ENCODE measurements at regions of chr6 and their contacts with region 1.

Region 1: DNA sequence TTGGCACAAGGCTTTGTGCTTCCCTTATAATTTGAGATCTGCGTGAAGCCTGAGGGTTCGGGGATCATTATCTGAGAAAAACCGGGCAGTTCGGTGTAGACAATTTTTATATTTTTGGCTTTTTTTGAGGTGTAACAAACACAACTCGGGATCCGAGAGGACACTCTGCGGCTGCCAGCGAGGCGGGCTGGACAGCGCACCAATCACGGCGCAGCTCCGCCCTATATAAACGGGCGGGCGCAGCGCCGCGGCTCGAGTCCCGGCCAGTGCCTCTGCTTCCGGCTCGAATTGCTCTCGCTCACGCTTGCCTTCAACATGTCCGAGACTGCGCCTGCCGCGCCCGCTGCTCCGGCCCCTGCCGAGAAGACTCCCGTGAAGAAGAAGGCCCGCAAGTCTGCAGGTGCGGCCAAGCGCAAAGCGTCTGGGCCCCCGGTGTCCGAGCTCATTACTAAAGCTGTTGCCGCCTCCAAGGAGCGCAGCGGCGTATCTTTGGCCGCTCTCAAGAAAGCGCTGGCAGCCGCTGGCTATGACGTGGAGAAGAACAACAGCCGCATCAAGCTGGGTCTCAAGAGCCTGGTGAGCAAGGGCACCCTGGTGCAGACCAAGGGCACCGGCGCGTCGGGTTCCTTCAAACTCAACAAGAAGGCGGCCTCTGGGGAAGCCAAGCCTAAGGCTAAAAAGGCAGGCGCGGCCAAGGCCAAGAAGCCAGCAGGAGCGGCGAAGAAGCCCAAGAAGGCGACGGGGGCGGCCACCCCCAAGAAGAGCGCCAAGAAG is 69.0 kb downstream of the HFE start:
- DNase-seq: peak; percentile 74 to 91 (median 83)
- ATAC-seq: peak; percentile 41 to 65 (median 63)
- H3K4me3 ChIP-seq: peak overlapping the region; percentile 73 to 87
- H3K4me3 Mint-ChIP-seq: peak overlapping the region; percentile 91 to 98 (median 97)
- H3K27ac ChIP-seq: peak overlapping the region; percentile 90
- H3K27ac Mint-ChIP-seq: peak overlapping the region; percentile 94 to 98
- H3K4me1 ChIP-seq: peaks cover 15 to 31% of the 10 kb centered on the region in 2 experiments
- H3K4me1 Mint-ChIP-seq: peaks cover 28 to 60% (median 40%) of the 10 kb centered on the region in 3 donors
- H3K27me3 ChIP-seq: no peaks in the 10 kb centered on the region
- H3K27me3 Mint-ChIP-seq: no peaks in the 10 kb centered on the region

Region 2: GRCh38 chr6:26045065-26045927 is 111.0 kb before region 1 on chr6:
- CTCF ChIA-PET with region 1: interaction called in 1 of 2 experiments, 3 read pairs
- POLR2A ChIA-PET with region 1: interaction called, 3 to 70 read pairs
- DNase-seq: peak; percentile 45 to 90 (median 78)
- ATAC-seq: peak; percentile 63 to 66 (median 64)
- H3K4me3 ChIP-seq: peak overlapping the region; percentile 77 to 83
- H3K4me3 Mint-ChIP-seq: peak overlapping the region; percentile 84 to 91 (median 90)
- H3K27ac ChIP-seq: peak overlapping the region; percentile 90
- H3K27ac Mint-ChIP-seq: peak overlapping the region; percentile 98
- H3K4me1 ChIP-seq: peaks cover 5 to 26% of the 10 kb centered on the region in 2 experiments
- H3K4me1 Mint-ChIP-seq: peaks cover 15 to 27% (median 26%) of the 10 kb centered on the region in 3 donors
- H3K27me3 ChIP-seq: no peaks in the 10 kb centered on the region
- H3K27me3 Mint-ChIP-seq: no peaks in the 10 kb centered on the region

Region 3: DNA sequence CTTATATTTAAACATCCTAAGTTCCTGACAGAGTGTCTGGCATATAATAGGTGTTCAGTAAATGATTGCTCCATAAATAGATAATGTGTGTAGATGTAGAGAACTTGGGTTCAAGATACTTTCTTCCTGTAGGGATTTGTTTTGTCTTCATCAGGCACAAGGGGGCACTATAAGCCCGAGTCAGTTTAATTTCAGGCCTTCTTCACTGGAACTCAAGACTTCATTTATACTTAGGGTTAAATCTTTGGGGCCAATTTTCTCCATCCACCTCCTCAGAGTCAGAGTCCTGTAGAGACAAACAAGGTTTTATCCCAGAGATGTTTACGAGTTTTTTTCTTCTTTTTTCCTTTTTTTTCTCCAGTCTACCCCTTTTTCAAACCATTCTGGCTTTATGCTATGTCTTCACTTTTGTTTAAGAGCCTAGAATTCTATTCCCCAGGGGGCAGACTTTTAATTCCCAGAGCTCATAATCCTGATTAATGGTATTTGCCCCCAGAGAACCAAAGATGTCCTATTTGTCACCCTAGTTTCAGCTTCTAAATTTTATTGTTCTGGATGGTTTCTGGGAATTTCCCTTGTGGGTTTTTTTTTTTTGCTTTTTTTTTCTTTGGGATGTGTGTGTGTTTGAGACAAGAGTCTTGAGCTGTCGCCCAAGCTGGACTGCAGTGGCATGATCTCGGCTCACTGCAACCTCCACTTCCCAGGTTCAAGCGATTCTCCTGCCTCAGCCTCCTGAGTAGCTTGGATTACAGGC is 19.3 kb after region 1 on chr6:
- CTCF ChIA-PET with region 1: interaction called in 1 of 2 experiments, 22 read pairs
- POLR2A ChIA-PET with region 1: interaction called, 23 to 75 read pairs
- DNase-seq: peak in 24 of 35 experiments; percentile 30 to 85 (median 50)
- ATAC-seq: no peak
- H3K4me3 ChIP-seq: no peak overlapping the region
- H3K4me3 Mint-ChIP-seq: peak overlapping the region in 1 of 3 donors; percentile 5
- H3K27ac ChIP-seq: peak overlapping the region; percentile 37
- H3K27ac Mint-ChIP-seq: peak overlapping the region; percentile 58 to 73
- H3K4me1 ChIP-seq: peaks cover 11 to 15% of the 10 kb centered on the region in 2 experiments
- H3K4me1 Mint-ChIP-seq: peaks cover 36 to 39% (median 37%) of the 10 kb centered on the region in 3 donors
- H3K27me3 ChIP-seq: no peaks in the 10 kb centered on the region
- H3K27me3 Mint-ChIP-seq: no peaks in the 10 kb centered on the region

Region 4: GRCh38 chr6:26216356-26216885 is 60.2 kb after region 1 on chr6:
- CTCF ChIA-PET with region 1: interaction called in 1 of 2 experiments, 27 read pairs
- POLR2A ChIA-PET with region 1: interaction called, 52 to 231 read pairs
- DNase-seq: peak; percentile 56 to 93 (median 76)
- ATAC-seq: peak; percentile 77 to 87 (median 83)
- H3K4me3 ChIP-seq: peak overlapping the region; percentile 73 to 91
- H3K4me3 Mint-ChIP-seq: no peak overlapping the region
- H3K27ac ChIP-seq: peak overlapping the region; percentile 94
- H3K27ac Mint-ChIP-seq: no peak overlapping the region
- H3K4me1 ChIP-seq: peaks cover 13 to 32% of the 10 kb centered on the region in 2 experiments
- H3K4me1 Mint-ChIP-seq: peaks cover 0 to 8% (median 5%) of the 10 kb centered on the region in 3 donors
- H3K27me3 ChIP-seq: no peaks in the 10 kb centered on the region
- H3K27me3 Mint-ChIP-seq: no peaks in the 10 kb centered on the region

Region 5: DNA sequence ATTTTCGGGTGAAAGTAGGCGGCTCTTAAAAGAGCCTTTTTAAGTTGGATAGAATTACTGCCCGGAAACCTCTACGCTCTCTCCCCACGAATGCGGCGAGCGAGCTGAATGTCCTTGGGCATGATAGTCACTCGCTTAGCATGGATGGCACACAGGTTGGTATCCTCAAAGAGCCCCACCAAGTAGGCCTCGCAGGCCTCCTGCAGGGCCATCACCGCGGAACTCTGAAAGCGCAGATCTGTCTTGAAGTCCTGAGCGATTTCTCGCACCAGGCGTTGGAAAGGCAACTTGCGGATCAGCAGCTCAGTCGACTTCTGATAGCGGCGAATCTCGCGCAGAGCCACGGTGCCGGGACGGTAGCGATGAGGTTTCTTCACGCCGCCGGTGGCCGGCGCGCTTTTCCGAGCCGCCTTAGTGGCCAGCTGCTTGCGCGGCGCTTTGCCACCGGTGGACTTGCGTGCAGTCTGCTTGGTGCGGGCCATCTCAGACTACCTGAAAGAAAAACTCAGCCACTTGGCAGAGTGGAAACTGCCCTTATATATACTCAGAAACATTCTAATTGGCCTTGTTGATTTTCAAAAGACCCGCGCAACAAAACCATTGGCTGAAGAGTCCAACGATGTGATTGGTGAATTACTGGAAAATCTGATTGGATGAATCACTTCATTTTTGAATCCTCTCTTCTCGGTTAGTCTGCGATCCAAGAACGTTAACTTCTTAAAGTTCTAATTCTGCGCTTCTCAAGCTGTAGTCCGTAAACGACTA is 114.8 kb after region 1 on chr6:
- CTCF ChIA-PET with region 1: interaction called, 3 to 6 read pairs
- POLR2A ChIA-PET with region 1: interaction called, 3 to 30 read pairs
- DNase-seq: peak; percentile 49 to 90 (median 74)
- ATAC-seq: peak; percentile 20 to 35 (median 32)
- H3K4me3 ChIP-seq: peak overlapping the region; percentile 71 to 83
- H3K4me3 Mint-ChIP-seq: no peak overlapping the region
- H3K27ac ChIP-seq: peak overlapping the region; percentile 89
- H3K27ac Mint-ChIP-seq: peak overlapping the region in 1 of 2 donors; percentile 58
- H3K4me1 ChIP-seq: peaks cover 18 to 31% of the 10 kb centered on the region in 2 experiments
- H3K4me1 Mint-ChIP-seq: peaks cover 20 to 29% (median 21%) of the 10 kb centered on the region in 3 donors
- H3K27me3 ChIP-seq: no peaks in the 10 kb centered on the region
- H3K27me3 Mint-ChIP-seq: no peaks in the 10 kb centered on the region

Region 6: DNA sequence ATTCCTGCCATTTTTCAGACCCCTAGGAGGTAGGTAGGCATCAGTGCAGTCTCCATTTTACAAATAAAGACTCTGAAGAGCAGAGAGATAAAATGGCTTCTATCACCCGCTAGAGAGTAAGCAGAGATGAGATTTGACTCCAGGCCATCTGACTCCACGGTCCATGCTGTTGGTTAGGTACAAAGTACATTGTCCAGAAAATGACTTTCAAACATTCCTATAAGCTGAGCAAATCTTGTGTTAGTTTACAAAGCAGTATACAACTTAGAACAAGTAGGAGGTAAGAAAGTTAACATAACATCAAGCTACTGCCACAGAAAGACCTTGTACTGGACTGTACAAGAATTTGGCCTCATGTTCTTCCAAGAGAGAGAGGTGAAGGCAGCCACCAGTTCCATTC is 358.7 kb after region 1 on chr6:
- CTCF ChIA-PET with region 1: no interaction called
- POLR2A ChIA-PET with region 1: no interaction called
- DNase-seq: no peak
- ATAC-seq: no peak
- H3K4me3 ChIP-seq: no peak overlapping the region
- H3K4me3 Mint-ChIP-seq: no peak overlapping the region
- H3K27ac ChIP-seq: no peak overlapping the region
- H3K27ac Mint-ChIP-seq: no peak overlapping the region
- H3K4me1 ChIP-seq: peaks cover under 1 to 2% of the 10 kb centered on the region in 2 experiments
- H3K4me1 Mint-ChIP-seq: peaks cover 2 to 3% (median 3%) of the 10 kb centered on the region in 3 donors
- H3K27me3 ChIP-seq: no peaks in the 10 kb centered on the region
- H3K27me3 Mint-ChIP-seq: no peaks in the 10 kb centered on the region

Region 7: DNA sequence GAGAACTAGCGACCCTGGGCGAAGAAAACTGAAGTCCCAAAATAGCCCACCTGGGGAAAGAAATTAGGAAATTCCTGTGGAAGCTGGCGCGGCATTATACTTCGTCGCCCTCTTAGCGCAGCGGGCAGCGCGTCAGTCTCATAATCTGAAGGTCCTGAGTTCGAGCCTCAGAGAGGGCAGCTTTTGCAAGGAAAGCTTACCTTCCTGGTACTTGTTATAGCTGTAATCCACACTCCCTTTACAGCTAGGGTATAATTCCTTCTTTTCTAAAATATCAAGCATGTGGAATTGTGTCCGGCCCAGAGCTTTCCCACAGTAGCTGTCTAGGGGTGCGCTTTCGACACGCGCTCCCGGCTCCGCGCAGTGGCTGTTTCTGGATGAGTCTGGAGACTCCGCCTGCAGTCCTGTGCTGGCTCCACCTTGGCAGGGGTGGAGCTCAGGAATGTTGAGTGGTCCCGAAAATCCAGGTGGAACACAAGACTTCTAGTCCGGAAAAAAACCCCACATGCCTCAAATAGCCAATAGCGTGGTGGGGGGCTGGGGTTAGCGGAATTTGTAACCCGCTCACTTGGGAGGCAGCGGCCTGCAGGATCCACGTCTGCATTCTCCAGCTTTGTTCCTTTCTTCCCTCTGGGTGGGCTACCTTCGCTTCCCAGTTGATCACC is 587.0 kb after region 1 on chr6:
- CTCF ChIA-PET with region 1: no interaction called
- POLR2A ChIA-PET with region 1: no interaction called
- DNase-seq: no peak
- ATAC-seq: no peak
- H3K4me3 ChIP-seq: no peak overlapping the region
- H3K4me3 Mint-ChIP-seq: no peak overlapping the region
- H3K27ac ChIP-seq: no peak overlapping the region
- H3K27ac Mint-ChIP-seq: no peak overlapping the region
- H3K4me1 ChIP-seq: no peaks in the 10 kb centered on the region
- H3K4me1 Mint-ChIP-seq: no peaks in the 10 kb centered on the region
- H3K27me3 ChIP-seq: peaks cover 12 to 31% of the 10 kb centered on the region in 2 experiments
- H3K27me3 Mint-ChIP-seq: peaks cover 45 to 48% of the 10 kb centered on the region in 2 donors

Region 8: DNA sequence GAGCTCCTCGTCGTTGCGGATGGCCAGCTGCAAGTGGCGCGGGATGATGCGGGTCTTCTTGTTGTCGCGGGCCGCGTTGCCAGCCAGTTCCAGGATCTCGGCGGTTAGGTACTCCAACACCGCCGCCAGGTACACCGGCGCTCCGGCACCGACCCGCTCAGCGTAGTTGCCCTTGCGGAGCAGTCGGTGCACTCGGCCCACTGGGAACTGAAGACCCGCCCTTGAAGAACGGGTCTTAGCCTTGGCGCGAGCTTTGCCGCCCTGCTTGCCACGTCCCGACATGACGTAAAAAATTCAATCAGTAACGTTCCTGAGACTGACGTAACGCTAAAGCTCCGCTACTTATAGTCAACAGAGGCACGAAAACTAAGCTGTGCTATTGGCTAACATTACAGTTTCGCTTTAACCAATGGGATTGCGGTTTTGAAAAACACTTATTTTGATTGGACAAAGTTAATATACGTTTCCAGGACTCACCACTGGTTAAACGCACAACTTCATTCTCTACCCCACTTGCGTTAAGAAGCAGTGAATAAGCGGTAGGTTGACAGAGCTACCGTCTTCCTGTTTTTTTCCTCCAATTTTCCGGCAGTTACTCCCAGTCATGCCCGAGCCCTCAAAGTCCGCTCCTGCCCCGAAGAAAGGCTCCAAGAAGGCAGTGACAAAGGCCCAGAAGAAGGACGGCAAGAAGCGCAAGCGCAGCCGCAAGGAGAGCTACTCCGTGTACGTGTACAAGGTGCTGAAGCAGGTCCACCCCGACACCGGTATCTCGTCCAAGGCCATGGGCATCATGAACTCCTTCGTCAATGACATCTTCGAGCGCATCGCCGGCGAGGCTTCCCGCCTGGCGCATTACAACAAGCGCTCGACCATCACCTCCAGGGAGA is 1682.0 kb after region 1 on chr6:
- CTCF ChIA-PET with region 1: interaction called in 1 of 2 experiments, 6 read pairs
- POLR2A ChIA-PET with region 1: interaction called, 3 to 13 read pairs
- DNase-seq: peak; percentile 62 to 97 (median 79)
- ATAC-seq: peak; percentile 80 to 83 (median 82)
- H3K4me3 ChIP-seq: peak overlapping the region; percentile 86 to 87
- H3K4me3 Mint-ChIP-seq: no peak overlapping the region
- H3K27ac ChIP-seq: peak overlapping the region; percentile 99
- H3K27ac Mint-ChIP-seq: no peak overlapping the region
- H3K4me1 ChIP-seq: peaks cover 14 to 28% of the 10 kb centered on the region in 2 experiments
- H3K4me1 Mint-ChIP-seq: peaks cover 9 to 20% (median 9%) of the 10 kb centered on the region in 3 donors
- H3K27me3 ChIP-seq: peaks cover 0 to 8% of the 10 kb centered on the region in 2 experiments
- H3K27me3 Mint-ChIP-seq: peaks cover 4 to 7% of the 10 kb centered on the region in 2 donors